Endothelial cell of umbilical vein (primary cell): ENCODE measurements at regions of chr10 and their contacts with region 1.

Region 1: DNA sequence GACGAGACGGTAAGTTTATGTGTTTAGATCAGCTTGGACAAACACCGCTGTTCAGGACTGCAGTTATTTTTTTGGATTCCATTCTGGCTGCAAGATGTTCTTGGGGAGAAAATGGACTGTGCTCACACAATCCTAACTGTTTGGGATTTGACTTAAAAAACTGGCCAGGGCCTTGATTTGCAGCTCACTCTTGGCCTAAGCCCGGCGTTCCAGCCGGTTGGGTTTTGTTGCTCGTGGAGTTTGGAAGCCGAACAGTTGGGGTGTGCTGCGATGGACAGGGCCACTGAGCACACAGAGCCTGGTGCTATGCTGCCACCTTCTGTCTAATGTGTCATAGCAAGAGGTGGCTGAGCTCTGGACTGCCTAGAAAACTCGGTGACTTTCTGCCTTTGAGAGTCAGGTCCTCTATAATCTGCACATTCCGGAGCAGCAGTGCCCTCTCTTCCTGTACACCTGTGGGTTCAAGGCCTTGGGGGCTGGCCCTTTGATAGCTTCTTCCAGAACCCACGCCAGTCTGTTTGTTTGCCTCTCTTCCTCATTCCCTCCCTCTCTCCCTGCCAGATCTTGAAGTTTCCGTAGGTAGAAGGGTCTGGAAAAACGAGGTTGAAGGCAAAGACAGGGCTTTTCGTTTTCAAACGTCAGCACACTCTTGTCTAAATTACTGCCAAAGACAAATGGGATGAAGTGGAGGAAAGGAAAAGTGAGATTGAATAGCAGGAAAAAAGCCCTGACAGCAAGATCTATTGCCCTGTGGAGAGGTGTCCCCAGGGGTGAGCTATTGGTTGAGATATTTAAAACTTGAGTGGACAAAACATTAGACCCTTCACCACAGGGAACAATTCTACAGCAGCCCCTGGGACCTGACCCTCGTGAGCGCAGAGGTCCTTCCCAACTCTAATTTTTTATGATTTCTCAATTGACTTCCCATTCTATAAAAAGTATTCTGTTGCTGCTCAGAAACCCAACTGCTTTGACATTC is 167.5 kb upstream of the HABP2 start:
- DNase-seq: peak; percentile 83
- H3K4me3 ChIP-seq: no peak overlapping the region
- H3K27ac ChIP-seq: no peak overlapping the region
- H3K4me1 ChIP-seq: peaks cover 28% of the 10 kb centered on the region
- H3K27me3 ChIP-seq: peaks cover 1 to 5% of the 10 kb centered on the region in 2 experiments
- CTCF ChIP-seq: peak; percentile 78 to 90
- POLR2A ChIP-seq: no peak

Region 2: DNA sequence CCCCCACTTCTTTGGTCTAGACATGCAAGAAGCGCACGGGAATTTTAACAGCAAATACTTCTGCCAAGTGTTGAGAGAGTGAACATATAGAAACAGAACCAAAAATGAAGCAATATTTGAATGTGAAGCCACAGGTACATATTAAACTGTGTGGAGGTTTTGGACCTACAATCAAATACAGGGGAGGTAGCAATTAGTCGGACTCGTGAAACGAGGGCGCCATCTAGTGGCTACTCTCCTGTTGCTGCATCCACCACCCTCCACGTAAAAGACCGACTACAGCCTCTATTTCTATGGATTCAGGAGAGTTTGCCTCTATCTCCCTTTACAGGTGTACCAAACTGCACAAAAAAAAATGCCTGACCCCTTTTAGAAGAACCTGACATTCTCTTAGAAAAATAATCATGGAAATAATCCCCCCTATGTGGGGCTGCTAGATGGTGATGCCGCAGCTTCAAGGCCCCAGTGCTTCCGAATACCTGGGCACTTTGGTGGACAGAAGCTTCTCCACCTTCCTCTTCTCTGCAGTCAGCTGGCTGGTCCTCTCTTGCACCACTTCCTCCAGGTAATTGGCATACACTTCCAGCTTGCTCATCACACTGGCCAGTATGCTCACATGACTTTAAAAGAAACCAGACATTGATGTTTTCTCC is 1070.4 kb before region 1 on chr10:
- CTCF ChIA-PET with region 1: no interaction called
- POLR2A ChIA-PET with region 1: no interaction called
- dilution Hi-C with region 1: no loop called
- intact Hi-C with region 1: loop called (anchors 5 kb)
- DNase-seq: peak; percentile 68
- H3K4me3 ChIP-seq: no peak overlapping the region
- H3K27ac ChIP-seq: no peak overlapping the region
- H3K4me1 ChIP-seq: peaks cover 20% of the 10 kb centered on the region
- H3K27me3 ChIP-seq: no peaks in the 10 kb centered on the region
- CTCF ChIP-seq: peak; percentile 81 to 88
- POLR2A ChIP-seq: no peak

Region 3: GRCh38 chr10:112565434-112566053 is 819.8 kb before region 1 on chr10:
- CTCF ChIA-PET with region 1: interaction called, 23 read pairs
- POLR2A ChIA-PET with region 1: no interaction called
- dilution Hi-C with region 1: no loop called
- intact Hi-C with region 1: loop called (anchors 1 kb)
- DNase-seq: peak; percentile 87
- H3K4me3 ChIP-seq: no peak overlapping the region
- H3K27ac ChIP-seq: no peak overlapping the region
- H3K4me1 ChIP-seq: no peaks in the 10 kb centered on the region
- H3K27me3 ChIP-seq: no peaks in the 10 kb centered on the region
- CTCF ChIP-seq: peak; percentile 53
- POLR2A ChIP-seq: no peak

Region 4: DNA sequence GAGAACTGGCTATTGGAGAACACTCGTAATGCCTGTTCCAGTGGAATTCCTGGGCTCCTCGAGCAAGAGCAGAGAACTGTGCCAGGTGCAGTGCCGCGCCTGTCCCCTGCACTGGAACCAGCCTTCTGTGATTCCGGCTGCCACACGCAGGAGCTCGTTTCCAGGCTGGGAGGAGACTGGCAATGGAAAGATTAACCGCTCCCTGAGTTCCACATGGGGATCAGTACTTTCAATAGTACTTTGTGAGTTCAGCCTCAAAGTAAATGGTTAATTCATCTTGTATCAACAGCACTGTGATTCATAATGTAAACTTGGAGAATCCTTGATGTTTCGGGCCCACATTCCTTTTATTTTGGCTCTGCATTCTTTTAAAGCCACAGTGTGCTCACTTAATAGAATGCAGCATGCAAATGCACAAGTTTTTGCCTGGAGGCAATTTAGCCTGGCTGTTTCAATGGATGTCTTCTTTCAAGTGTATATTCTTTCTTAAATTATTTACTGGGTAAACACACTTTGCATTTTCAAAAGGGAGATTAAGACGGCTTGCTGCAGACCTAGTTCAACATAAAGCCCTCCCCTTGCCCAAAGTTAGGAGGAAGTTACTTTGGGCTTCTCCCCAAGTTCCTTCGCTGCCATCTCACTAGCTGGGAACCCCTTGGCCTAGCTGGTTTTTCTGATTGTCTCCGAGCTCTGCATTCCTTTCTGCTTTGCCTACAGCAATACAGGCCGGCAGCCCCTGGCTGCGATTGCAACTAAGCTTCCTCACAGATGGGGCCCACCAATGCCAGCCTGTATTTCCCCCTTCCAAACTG is 573.4 kb before region 1 on chr10:
- CTCF ChIA-PET with region 1: interaction called, 4 read pairs
- POLR2A ChIA-PET with region 1: no interaction called
- dilution Hi-C with region 1: no loop called
- intact Hi-C with region 1: loop called (anchors 10 kb)
- DNase-seq: peak; percentile 69
- H3K4me3 ChIP-seq: no peak overlapping the region
- H3K27ac ChIP-seq: no peak overlapping the region
- H3K4me1 ChIP-seq: peaks cover 13% of the 10 kb centered on the region
- H3K27me3 ChIP-seq: no peaks in the 10 kb centered on the region
- CTCF ChIP-seq: no peak
- POLR2A ChIP-seq: no peak

Region 5: DNA sequence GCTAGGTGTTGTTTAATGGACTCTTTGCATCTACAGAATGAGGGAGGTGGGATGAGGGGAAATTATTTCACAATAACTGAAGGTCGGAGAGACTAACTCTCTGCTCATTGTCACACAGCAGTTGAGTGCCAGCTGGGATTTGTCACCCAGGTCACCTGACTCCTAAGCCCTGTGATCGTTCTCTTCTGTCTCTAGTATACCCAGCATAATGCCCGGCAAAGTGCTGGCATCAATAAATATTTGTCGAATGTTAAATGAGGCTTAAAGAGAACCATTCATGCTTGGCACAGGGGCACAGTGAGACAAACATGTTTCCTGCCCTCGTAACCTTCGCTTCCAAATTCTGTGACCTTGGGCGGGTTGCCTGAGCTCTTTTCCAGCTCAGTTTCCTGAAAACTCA is 364.5 kb before region 1 on chr10:
- CTCF ChIA-PET with region 1: interaction called, 4 read pairs
- POLR2A ChIA-PET with region 1: no interaction called
- dilution Hi-C with region 1: no loop called
- intact Hi-C with region 1: loop called (anchors 2 kb)
- DNase-seq: no peak
- H3K4me3 ChIP-seq: no peak overlapping the region
- H3K27ac ChIP-seq: no peak overlapping the region
- H3K4me1 ChIP-seq: peaks cover 18% of the 10 kb centered on the region
- H3K27me3 ChIP-seq: no peaks in the 10 kb centered on the region
- CTCF ChIP-seq: no peak
- POLR2A ChIP-seq: no peak

Region 6: GRCh38 chr10:113131613-113132261 is 253.6 kb before region 1 on chr10:
- CTCF ChIA-PET with region 1: interaction called, 21 read pairs
- POLR2A ChIA-PET with region 1: no interaction called
- dilution Hi-C with region 1: no loop called
- intact Hi-C with region 1: loop called (anchors 1 kb)
- DNase-seq: peak; percentile 9
- H3K4me3 ChIP-seq: no peak overlapping the region
- H3K27ac ChIP-seq: no peak overlapping the region
- H3K4me1 ChIP-seq: no peaks in the 10 kb centered on the region
- H3K27me3 ChIP-seq: no peaks in the 10 kb centered on the region
- CTCF ChIP-seq: no peak
- POLR2A ChIP-seq: no peak

Region 7: GRCh38 chr10:113259576-113260226 is 125.6 kb before region 1 on chr10:
- CTCF ChIA-PET with region 1: no interaction called
- POLR2A ChIA-PET with region 1: no interaction called
- dilution Hi-C with region 1: no loop called
- intact Hi-C with region 1: no loop called
- DNase-seq: no peak
- H3K4me3 ChIP-seq: no peak overlapping the region
- H3K27ac ChIP-seq: no peak overlapping the region
- H3K4me1 ChIP-seq: no peaks in the 10 kb centered on the region
- H3K27me3 ChIP-seq: no peaks in the 10 kb centered on the region
- CTCF ChIP-seq: no peak
- POLR2A ChIP-seq: no peak

Region 8: GRCh38 chr10:113347508-113347907 is 37.8 kb before region 1 on chr10:
- CTCF ChIA-PET with region 1: no interaction called
- POLR2A ChIA-PET with region 1: no interaction called
- dilution Hi-C with region 1: no loop called
- intact Hi-C with region 1: no loop called
- DNase-seq: no peak
- H3K4me3 ChIP-seq: no peak overlapping the region
- H3K27ac ChIP-seq: no peak overlapping the region
- H3K4me1 ChIP-seq: no peaks in the 10 kb centered on the region
- H3K27me3 ChIP-seq: peaks cover 3 to 11% of the 10 kb centered on the region in 2 experiments
- CTCF ChIP-seq: no peak
- POLR2A ChIP-seq: no peak

Region 9: DNA sequence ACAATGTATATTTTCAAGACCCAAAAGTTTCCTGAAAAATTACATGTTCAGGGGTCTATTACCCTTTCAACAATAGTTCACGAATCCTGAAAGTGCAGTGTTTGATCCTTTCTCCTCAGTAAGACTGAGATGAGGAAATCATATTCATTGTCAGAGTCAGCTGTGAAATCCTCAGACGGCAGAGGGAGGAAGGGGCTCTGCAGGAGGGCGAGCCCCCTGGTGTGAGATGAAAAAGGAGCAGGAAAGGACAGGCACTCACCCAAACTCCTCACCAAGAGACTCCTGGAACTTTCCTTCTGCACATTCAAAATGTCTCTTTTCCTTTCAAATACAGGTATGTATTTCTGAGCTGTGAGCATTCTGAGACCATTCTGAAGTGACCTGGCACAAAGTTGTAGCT is 17.3 kb after region 1 on chr10:
- CTCF ChIA-PET with region 1: no interaction called
- POLR2A ChIA-PET with region 1: no interaction called
- dilution Hi-C with region 1: no loop called
- intact Hi-C with region 1: no loop called
- DNase-seq: no peak
- H3K4me3 ChIP-seq: no peak overlapping the region
- H3K27ac ChIP-seq: no peak overlapping the region
- H3K4me1 ChIP-seq: no peaks in the 10 kb centered on the region
- H3K27me3 ChIP-seq: no peaks in the 10 kb centered on the region
- CTCF ChIP-seq: no peak
- POLR2A ChIP-seq: no peak

Region 10: DNA sequence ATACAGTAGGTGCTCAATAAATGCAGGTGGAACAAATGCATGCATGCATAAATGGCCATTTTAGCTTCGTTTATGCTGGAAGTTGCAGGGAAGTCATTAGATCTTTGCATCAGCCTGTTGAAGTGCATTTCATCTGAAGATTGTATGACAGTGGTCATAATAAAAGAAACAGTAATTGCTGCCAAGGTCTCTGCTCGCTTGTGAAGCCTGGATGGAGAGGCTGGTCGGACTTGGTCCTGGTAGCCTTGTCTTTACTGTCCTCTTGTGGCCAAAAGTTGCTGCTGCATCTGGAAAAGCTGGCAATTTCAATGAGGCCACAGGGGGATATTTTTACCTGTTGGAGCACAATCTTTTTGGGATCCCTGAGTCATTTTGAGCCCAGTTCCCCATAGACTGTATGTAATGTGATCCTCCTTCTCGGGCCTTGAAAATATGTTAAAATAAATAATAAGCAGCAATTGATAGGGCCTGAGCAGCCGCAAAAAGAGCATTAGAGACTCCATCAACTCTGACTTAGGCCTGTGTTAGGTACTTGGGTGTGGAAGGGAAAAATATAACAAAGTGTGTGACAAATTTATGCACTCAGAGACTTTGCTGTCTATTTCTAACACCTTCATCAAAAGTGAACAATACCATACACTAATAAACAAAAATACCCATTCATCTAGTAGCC is 135.9 kb after region 1 on chr10:
- CTCF ChIA-PET with region 1: interaction called, 13 read pairs
- POLR2A ChIA-PET with region 1: no interaction called
- dilution Hi-C with region 1: no loop called
- intact Hi-C with region 1: loop called (anchors 1 kb)
- DNase-seq: peak; percentile 73
- H3K4me3 ChIP-seq: no peak overlapping the region
- H3K27ac ChIP-seq: no peak overlapping the region
- H3K4me1 ChIP-seq: no peaks in the 10 kb centered on the region
- H3K27me3 ChIP-seq: peaks cover 0 to 1% of the 10 kb centered on the region in 2 experiments
- CTCF ChIP-seq: peak; percentile 92 to 95
- POLR2A ChIP-seq: no peak